ENCODE measurements at regions of chr5 and their contacts with region 1.

Region 1: DNA sequence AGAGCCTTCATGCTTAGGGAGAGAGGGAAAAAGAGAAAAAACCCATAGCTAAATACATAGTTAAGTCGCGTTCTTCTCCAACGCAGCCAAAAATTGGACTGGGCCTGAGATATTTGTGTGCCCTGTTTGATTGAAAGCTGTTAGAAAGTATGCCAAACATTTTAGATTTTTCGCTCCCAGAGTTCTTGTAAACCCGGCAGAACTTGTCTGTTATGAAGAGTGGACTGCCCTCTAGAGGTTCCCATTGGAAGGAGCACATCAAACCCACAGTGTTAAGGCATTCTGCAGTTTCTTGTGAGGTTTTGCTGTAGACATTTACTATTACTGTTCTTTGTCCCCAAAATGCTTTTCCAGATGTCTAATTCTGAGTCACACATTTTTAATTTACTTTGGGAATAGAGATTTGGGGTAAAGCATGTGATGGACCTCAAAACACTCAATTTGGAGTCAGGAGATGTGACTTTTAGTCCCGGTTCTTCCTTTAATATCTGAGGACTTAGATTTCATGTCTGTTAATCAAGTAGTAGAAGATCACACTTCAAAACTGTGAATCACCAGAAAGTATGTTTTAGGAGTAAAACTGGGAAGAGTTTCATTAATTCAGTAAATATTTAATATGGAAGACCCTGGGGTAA is 96.6 kb downstream of the PCSK1 start:
- DNase-seq: no peak

Region 2: DNA sequence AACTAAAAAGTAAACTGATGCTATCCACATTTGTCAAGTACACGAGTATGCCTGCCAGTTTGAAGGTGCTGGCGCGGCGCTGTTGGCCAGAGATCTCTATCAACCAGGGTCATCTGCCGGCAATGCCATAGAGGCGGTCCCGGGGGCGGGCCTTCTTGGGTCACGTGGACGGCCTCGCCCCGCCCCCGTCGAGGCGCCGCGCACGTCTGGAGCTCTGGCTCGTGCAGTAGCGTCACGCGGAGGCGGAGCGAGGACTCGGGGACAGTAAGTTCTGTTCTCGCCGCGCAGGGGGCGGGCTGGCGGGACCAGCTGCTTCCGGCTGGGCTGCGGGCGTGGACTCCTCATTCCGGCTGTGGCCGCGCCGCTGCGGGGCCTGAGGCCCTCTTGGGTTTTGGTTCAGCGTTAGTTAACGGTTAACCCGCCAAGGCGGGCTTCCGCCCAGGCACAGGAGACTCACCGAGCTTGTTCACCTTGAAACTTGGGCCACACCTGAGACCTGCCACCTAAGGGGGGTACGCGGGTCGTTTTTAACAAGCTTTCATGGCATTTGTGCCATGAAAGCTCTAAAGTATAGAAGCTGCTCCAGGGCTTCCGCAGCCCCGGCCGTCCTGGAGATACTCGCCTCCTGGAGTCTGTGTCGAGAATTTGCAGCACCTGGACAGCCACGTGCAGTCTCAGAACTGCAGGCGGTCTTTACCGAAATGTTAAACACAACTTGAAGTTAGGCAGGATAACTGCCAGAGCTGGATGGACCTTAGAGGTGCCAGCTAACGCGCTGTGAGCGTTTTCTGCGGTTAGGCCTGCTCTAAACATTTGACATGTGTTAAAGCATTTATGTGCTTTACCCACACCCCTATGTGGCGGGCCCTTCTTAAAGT is 689.7 kb before region 1 on chr5 and contains the start of gene RFESD:
- intact Hi-C with region 1: loop called (anchors 10 kb)
- DNase-seq: peak; percentile 98
- total RNA-seq, gene RFESD: 2.7 TPM

Region 3: GRCh38 chr5:95858661-95859326 is 477.7 kb before region 1 on chr5:
- intact Hi-C with region 1: loop called (anchors 1 kb)
- DNase-seq: peak; percentile 95

Region 4: DNA sequence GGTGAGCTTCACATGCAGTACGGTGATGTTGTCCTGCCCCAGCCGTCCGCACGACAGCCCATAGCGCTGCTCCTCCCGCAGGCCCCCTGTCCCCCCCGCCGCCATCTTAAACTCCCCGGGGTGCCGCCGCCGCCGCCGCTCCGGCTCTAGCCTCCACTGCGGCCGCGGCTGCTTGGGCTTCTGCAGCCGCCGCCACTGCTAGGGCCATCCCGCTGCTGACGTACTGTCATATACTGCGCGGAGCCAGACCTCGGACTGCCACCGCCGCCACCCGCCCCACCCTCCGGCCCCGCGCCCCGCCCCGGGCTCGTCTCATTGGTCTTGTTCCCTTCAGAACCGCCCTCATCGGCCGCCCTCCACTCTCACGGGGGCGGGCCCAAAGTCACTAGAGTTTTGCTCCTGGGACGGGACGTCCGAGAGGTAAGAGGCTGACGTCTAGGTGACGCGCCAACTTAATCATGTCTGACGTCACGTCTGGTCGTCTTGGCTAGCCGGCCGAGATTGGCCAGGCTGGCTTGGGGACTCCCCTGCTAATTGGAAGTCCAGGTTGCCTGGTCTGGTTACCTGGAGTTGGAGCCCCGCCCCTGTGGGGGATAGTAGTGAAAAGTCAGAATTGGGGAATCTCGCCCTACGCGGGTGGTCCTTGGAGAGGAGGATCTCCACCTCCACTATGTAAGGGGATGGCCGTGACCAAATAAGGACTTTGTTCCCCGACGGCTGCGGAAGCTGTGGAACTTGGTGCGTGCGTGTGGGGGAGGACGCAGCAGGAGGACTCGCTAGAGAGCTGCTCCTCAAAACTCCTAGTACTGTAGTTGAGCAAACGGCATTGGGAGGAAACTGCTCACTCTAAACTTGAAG is 374.6 kb before region 1 on chr5 and contains the start of gene ELL2:
- intact Hi-C with region 1: loop called (anchors 1 kb)
- DNase-seq: peak; percentile 99
- total RNA-seq, gene ELL2: 30.5 TPM

Region 5: GRCh38 chr5:96140084-96140483 is 196.4 kb before region 1 on chr5:
- intact Hi-C with region 1: no loop called
- DNase-seq: no peak

Region 6: GRCh38 chr5:96226941-96227552 is 109.4 kb before region 1 on chr5:
- intact Hi-C with region 1: no loop called
- DNase-seq: no peak

Region 7: DNA sequence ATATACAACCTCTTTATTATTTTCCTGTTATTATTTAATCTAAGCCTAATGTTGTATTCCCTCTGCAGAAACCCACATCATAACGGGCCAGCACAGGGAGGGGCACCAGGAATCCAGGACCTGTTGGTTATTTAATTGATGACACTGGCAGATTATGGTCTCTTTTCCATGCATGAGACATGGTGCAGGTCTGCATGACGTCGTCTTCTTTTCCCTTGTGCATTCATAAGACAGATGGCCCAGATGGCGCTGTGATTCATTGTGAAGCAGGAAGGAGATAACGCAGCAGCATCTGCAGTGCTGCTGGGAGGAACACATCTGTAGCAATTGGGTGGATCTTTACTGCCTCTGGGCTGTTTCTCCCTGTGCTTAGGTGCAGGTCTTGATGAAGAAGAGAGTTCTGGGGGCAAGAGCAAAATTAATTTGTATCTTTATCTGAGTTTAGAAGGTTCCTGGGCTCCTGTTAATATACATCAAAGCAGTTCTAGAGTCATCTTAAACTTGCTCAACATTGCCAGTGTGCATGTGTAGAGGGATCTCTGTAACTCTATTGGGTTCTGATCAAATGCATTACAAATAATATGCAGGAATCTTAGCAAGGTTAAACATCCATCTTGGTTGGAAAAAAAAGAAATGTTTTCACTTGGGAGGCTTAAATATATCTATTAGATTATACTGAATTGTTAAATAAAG is 79.5 kb before region 1 on chr5:
- intact Hi-C with region 1: loop called (anchors 5 kb)
- DNase-seq: no peak

Region 8: GRCh38 chr5:96350678-96351077 is 14.2 kb after region 1 on chr5:
- intact Hi-C with region 1: no loop called
- DNase-seq: no peak

Region 9: DNA sequence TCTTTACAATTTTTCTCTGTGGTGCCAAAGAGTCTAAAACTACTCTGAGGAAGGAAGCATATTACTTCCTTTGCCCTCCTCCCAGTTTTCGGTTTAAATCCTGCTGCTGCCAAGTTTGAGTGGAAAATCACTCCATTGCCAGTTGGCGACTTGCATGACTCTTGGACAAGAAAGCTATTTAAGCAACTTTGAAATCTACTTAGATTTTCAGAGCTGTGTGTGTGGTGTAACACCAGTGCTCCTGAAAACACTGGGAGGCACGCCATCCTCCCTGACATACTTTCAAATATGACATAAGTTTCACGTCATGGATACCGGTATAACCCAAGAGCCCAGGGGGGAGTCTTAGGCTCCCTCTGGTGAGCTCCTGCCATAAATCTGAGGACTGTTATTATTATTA is 930.1 kb after region 1 on chr5:
- intact Hi-C with region 1: no loop called
- DNase-seq: no peak

Measured in cardiac septum (tissue), 1 donor.